CD14-positive monocyte (primary cell): ENCODE measurements at regions of chr22 and their contacts with region 1.

Region 1: DNA sequence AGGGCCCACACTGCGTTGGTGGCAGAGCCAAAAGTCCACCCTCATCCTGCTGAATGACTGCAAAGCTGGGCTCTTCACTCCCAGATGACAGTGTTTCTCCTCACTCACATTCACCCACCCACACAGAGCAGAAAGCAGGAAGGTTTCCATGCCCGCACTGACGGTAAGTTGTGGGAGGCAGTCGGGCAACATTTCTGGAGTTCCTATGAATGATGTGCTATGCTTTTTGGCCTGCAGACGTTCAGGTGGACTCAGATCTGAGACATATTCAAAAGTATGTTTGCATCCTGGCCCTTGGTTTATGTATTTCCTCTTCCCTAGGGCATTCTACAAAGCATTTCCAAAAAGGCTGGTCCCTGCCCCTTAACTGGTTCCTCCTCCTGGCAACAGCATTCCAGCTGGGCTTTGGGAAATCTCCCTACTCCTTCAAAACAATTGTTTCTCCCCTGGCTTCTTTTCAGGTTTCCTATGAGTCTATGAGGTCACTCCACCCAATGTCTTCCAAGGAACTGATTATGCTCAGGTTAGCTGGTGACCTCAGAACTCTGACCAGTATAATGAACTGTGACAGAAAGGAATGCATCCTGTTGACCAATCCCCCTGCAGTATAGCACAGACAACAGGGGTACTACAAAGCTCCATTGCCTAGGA is 36.4 kb downstream of the PACSIN2 start:
- DNase-seq: no peak
- H3K4me3 ChIP-seq: no peak overlapping the region
- H3K4me3 Mint-ChIP-seq: no peak overlapping the region
- H3K27ac ChIP-seq: peak overlapping the region; percentile 3 to 64
- H3K27ac Mint-ChIP-seq: peak overlapping the region in 6 of 7 donors; percentile 61 to 85 (median 66)
- H3K4me1 ChIP-seq: peaks cover 33 to 39% of the 10 kb centered on the region in 2 donors
- H3K4me1 Mint-ChIP-seq: peaks cover 39% of the 10 kb centered on the region
- H3K27me3 ChIP-seq: no peaks in the 10 kb centered on the region
- H3K27me3 Mint-ChIP-seq: peaks cover 0 to 2% (median 0%) of the 10 kb centered on the region in 3 donors
- CTCF ChIP-seq: no peak

Region 2: GRCh38 chr22:42791721-42792420 is 186.7 kb before region 1 on chr22:
- intact Hi-C with region 1: no loop called
- DNase-seq: no peak
- H3K4me3 ChIP-seq: no peak overlapping the region
- H3K4me3 Mint-ChIP-seq: no peak overlapping the region
- H3K27ac ChIP-seq: no peak overlapping the region
- H3K27ac Mint-ChIP-seq: no peak overlapping the region
- H3K4me1 ChIP-seq: peaks cover 0 to 7% of the 10 kb centered on the region in 2 donors
- H3K4me1 Mint-ChIP-seq: no peaks in the 10 kb centered on the region
- H3K27me3 ChIP-seq: no peaks in the 10 kb centered on the region
- H3K27me3 Mint-ChIP-seq: peaks cover 0 to 2% (median 2%) of the 10 kb centered on the region in 3 donors
- CTCF ChIP-seq: no peak

Region 3: DNA sequence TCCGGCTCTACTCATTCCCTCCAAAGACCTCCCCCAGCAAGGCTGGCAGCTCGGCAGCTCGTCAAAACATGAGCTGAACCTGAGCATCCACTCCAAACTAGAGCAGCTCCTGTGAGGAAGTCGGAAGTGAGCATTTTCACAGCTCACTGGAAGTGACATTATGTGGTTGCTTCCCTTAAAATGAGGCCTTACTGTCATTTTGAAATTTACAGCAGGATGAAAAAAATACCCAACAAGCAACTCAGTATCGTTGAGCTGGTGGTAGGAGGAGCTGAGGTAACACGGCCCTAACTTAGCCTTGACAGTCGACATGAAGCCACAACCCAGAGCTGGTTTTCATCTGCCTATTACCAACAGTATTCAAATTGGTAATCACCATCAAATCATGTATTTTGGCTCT is 83.5 kb before region 1 on chr22:
- intact Hi-C with region 1: loop called in 1 of 2 experiments (anchors 5 kb)
- DNase-seq: peak; percentile 76 to 79 (median 78)
- H3K4me3 ChIP-seq: peak overlapping the region in 1 of 3 experiments; percentile 56
- H3K4me3 Mint-ChIP-seq: peak overlapping the region in 1 of 2 donors; percentile 79
- H3K27ac ChIP-seq: peak overlapping the region; percentile 94
- H3K27ac Mint-ChIP-seq: peak overlapping the region; percentile 96 to 99 (median 98)
- H3K4me1 ChIP-seq: peaks cover 77 to 80% of the 10 kb centered on the region in 2 donors
- H3K4me1 Mint-ChIP-seq: peaks cover 79% of the 10 kb centered on the region
- H3K27me3 ChIP-seq: no peaks in the 10 kb centered on the region
- H3K27me3 Mint-ChIP-seq: peaks cover 0 to 2% (median 0%) of the 10 kb centered on the region in 3 donors
- CTCF ChIP-seq: no peak

Region 4: GRCh38 chr22:43014869-43015676 is 36.5 kb after region 1 on chr22 and contains the start of gene PACSIN2:
- intact Hi-C with region 1: loop called in 1 of 2 experiments (anchors 5 kb)
- DNase-seq: peak; percentile 97 to 98 (median 97)
- H3K4me3 ChIP-seq: peak within 1 kb of the TSS; percentile 79 to 94 (median 88)
- H3K4me3 Mint-ChIP-seq: peak within 1 kb of the TSS; percentile 98 to 99
- H3K27ac ChIP-seq: peak within 1 kb of the TSS; percentile 27 to 81
- H3K27ac Mint-ChIP-seq: peak within 1 kb of the TSS; percentile 84 to 96 (median 89)
- H3K4me1 ChIP-seq: peaks cover 20 to 23% of the 10 kb centered on the region in 2 donors
- H3K4me1 Mint-ChIP-seq: peaks cover 33% of the 10 kb centered on the region
- H3K27me3 ChIP-seq: no peaks in the 10 kb centered on the region
- H3K27me3 Mint-ChIP-seq: peaks cover 0 to 9% (median 1%) of the 10 kb centered on the region in 3 donors
- CTCF ChIP-seq: no peak
- polyA plus RNA-seq, gene PACSIN2: 31.2 to 45.7 (median 40.2) TPM